Caco-2 (cell line): ENCODE measurements at regions of chr7 and their contacts with region 1.

Region 1: DNA sequence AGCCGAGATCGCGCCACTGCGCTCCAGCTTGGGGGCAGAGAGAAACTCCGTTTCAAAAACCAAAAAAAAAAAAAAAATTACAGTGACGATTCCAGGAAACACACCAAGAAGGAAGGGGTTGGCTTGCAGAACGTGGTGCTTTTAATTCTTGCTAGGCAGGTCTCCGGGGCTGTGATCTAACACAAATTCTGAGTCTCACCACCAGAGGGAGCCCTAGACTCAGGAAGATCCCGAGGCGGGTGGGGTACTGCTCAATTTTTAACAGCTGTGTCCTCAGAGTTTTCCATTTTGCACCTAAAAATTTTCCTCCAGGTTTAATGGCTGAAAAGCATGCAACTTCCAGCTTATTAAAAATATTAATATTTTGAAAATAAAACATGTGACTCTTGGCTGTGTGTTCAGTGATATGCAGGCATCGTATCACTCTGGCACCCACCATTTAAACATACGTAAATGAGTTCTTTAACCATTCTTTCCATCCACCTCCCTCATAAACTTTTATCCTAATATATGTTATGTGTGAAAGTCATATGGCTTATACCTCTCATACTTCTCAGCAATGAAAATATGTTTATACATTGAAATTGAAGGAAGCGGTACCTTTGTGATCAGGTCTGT is 26.5 kb upstream of the NUB1 start:
- DNase-seq: peak; percentile 66 to 86
- H3K4me3 ChIP-seq: no peak overlapping the region
- H3K4me3 Mint-ChIP-seq: no peak overlapping the region
- H3K27ac Mint-ChIP-seq: no peak overlapping the region
- H3K4me1 ChIP-seq: no peaks in the 10 kb centered on the region
- H3K4me1 Mint-ChIP-seq: no peaks in the 10 kb centered on the region
- H3K27me3 ChIP-seq: no peaks in the 10 kb centered on the region
- H3K27me3 Mint-ChIP-seq: no peaks in the 10 kb centered on the region
- CTCF ChIP-seq: peak; percentile 83 to 92

Region 2: GRCh38 chr7:151172273-151173141 is 142.6 kb before region 1 on chr7:
- CTCF ChIA-PET with region 1: no interaction called
- POLR2A ChIA-PET with region 1: no interaction called
- intact Hi-C with region 1: loop called (anchors 2 kb)
- DNase-seq: peak; percentile 63 to 84
- H3K4me3 ChIP-seq: no peak overlapping the region
- H3K4me3 Mint-ChIP-seq: no peak overlapping the region
- H3K27ac Mint-ChIP-seq: no peak overlapping the region
- H3K4me1 ChIP-seq: no peaks in the 10 kb centered on the region
- H3K4me1 Mint-ChIP-seq: peaks cover 5% of the 10 kb centered on the region
- H3K27me3 ChIP-seq: peaks cover 4% of the 10 kb centered on the region
- H3K27me3 Mint-ChIP-seq: peaks cover 33% of the 10 kb centered on the region
- CTCF ChIP-seq: peak; percentile 100

Region 3: DNA sequence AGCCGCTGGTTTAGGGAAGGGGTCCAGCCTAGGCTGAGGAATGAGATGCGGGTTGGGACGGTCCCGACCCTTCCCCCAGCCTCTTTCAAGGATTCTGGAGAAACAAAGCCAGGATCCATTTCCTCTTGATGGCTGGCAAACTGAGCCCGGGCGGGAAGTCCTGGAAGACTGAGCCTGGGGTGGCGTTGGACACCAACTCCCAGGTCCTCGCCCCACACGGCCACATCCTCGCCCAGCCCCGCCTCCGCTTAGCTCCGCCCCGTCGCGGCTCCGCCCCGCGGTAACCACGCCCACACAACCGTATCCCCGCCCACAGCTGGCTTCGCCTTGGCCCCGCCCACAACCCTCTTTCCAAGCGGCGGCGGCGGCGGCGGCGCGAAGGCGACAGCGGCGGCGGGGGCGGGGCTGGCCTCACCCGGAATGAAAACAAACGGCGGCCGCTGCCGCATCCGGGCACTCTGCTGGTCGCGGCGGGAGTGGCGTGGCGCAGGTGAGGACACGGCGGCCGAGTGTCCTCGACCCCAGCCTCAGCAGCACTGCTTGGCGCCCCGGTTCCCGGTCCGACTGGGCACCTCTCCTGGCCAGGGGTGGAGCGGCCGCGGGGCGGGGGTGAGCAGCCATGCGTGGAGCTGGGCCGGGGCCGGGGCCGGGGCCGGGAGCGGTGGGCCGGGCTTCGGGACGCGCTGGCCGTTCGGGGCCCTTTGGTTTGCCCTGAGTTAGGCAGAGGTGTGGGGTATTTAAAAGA is 26.4 kb after region 1 on chr7 and contains the start of gene NUB1:
- CTCF ChIA-PET with region 1: interaction called, 12 read pairs
- POLR2A ChIA-PET with region 1: interaction called, 4 read pairs
- intact Hi-C with region 1: no loop called
- DNase-seq: peak; percentile 88 to 96
- H3K4me3 ChIP-seq: peak within 1 kb of the TSS; percentile 85
- H3K4me3 Mint-ChIP-seq: peak within 1 kb of the TSS; percentile 75
- H3K27ac Mint-ChIP-seq: peak within 1 kb of the TSS; percentile 59
- H3K4me1 ChIP-seq: peaks cover 15% of the 10 kb centered on the region
- H3K4me1 Mint-ChIP-seq: peaks cover 11% of the 10 kb centered on the region
- H3K27me3 ChIP-seq: no peaks in the 10 kb centered on the region
- H3K27me3 Mint-ChIP-seq: no peaks in the 10 kb centered on the region
- CTCF ChIP-seq: no peak
- total RNA-seq, gene NUB1: 51.6 and 54.6 TPM in 2 replicates

Region 4: GRCh38 chr7:151351027-151351426 is 35.9 kb after region 1 on chr7:
- CTCF ChIA-PET with region 1: interaction called, 5 read pairs
- POLR2A ChIA-PET with region 1: no interaction called
- intact Hi-C with region 1: loop called (anchors 1 kb)
- DNase-seq: peak; percentile 45 to 68
- H3K4me3 ChIP-seq: no peak overlapping the region
- H3K4me3 Mint-ChIP-seq: no peak overlapping the region
- H3K27ac Mint-ChIP-seq: no peak overlapping the region
- H3K4me1 ChIP-seq: peaks cover 25% of the 10 kb centered on the region
- H3K4me1 Mint-ChIP-seq: peaks cover 16% of the 10 kb centered on the region
- H3K27me3 ChIP-seq: no peaks in the 10 kb centered on the region
- H3K27me3 Mint-ChIP-seq: no peaks in the 10 kb centered on the region
- CTCF ChIP-seq: peak; percentile 51 to 54

Region 5: GRCh38 chr7:151408839-151409666 is 93.9 kb after region 1 on chr7:
- CTCF ChIA-PET with region 1: no interaction called
- POLR2A ChIA-PET with region 1: no interaction called
- intact Hi-C with region 1: no loop called
- DNase-seq: no peak
- H3K4me3 ChIP-seq: peak overlapping the region; percentile 54
- H3K4me3 Mint-ChIP-seq: peak overlapping the region; percentile 59
- H3K27ac Mint-ChIP-seq: no peak overlapping the region
- H3K4me1 ChIP-seq: no peaks in the 10 kb centered on the region
- H3K4me1 Mint-ChIP-seq: no peaks in the 10 kb centered on the region
- H3K27me3 ChIP-seq: no peaks in the 10 kb centered on the region
- H3K27me3 Mint-ChIP-seq: peaks cover 3% of the 10 kb centered on the region
- CTCF ChIP-seq: no peak

Region 6: DNA sequence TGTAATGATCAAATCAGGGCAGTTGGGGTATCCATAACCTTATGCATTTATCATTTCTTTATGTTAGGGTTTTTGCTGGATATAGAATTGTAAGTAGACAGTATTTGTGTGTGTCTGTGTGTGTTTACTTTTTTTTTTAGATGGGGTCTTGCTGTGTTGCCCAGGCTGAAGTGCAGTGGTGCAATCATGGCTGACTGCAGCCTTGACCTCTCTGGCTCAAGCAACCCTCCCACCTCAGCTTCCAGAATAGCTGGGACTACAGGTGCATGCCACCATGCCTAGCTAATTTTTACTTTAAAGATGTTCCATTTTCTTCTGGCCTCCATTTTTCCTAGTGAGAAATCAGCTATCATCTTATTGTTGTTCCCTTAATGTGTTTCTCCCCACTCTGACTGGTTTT is 214.7 kb after region 1 on chr7:
- CTCF ChIA-PET with region 1: no interaction called
- POLR2A ChIA-PET with region 1: no interaction called
- intact Hi-C with region 1: no loop called
- DNase-seq: no peak
- H3K4me3 ChIP-seq: no peak overlapping the region
- H3K4me3 Mint-ChIP-seq: no peak overlapping the region
- H3K27ac Mint-ChIP-seq: no peak overlapping the region
- H3K4me1 ChIP-seq: no peaks in the 10 kb centered on the region
- H3K4me1 Mint-ChIP-seq: no peaks in the 10 kb centered on the region
- H3K27me3 ChIP-seq: no peaks in the 10 kb centered on the region
- H3K27me3 Mint-ChIP-seq: no peaks in the 10 kb centered on the region
- CTCF ChIP-seq: no peak